GM13977 (cell line): ENCODE measurements at regions of chr1 and their contacts with region 1.

Region 1: GRCh38 chr1:235079443-235080296 is 49.0 kb downstream of the TOMM20 start:
- DNase-seq: peak; percentile 39
- CTCF ChIP-seq: no peak

Region 2: GRCh38 chr1:234599617-234600417 is 479.9 kb before region 1 on chr1:
- in situ Hi-C with region 1: loop called (anchors 10 kb)
- DNase-seq: peak; percentile 90
- CTCF ChIP-seq: no peak

Region 3: DNA sequence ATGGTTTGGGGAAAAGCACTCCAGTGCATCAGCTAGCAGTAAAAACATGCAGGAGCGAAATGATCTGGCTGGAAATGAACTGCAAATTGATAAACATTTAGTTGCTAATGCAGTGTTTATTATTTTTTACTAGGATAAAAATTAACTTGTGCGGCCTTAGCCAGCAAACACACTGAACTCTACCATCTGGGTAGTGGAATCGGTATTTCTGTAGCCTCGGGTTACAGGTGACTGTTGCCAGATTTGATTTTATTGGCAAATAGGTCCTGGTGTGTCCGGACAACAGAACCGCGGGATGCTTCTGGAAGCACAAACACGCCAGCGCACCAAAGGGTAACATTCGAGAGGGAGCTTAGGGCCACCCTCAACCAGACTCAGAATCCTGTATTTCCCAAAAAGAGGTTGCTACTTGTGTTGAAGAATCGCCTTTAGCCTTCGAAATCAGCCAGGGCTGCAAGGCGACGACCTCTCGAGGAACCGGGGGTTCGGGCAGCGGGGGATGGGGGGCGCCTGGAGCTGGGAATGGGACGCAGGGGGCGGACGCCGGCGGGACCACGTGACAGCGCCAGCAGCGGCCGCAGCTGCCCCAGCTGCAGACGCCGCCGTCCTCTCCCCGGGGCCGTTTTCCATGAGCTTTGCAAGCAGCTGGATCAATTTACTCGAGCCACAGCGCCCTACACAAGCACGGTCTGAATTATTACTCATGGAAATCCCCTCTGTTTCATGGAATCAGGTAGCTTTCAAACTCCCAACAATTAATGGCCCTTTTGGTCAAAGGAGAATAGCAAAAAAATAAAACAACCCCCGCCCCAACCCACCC is 109.9 kb before region 1 on chr1:
- in situ Hi-C with region 1: loop called (anchors 5 kb)
- DNase-seq: no peak
- CTCF ChIP-seq: no peak

Region 4: GRCh38 chr1:235181561-235182245 is 102.0 kb after region 1 on chr1:
- in situ Hi-C with region 1: no loop called
- DNase-seq: no peak
- CTCF ChIP-seq: no peak

Region 5: GRCh38 chr1:235328357-235329138 is 248.9 kb after region 1 on chr1 and contains the start of gene GGPS1:
- in situ Hi-C with region 1: no loop called
- DNase-seq: peak; percentile 93
- CTCF ChIP-seq: no peak